B cell (primary cell): ENCODE measurements at regions of chr17 and their contacts with region 1.

Region 1: DNA sequence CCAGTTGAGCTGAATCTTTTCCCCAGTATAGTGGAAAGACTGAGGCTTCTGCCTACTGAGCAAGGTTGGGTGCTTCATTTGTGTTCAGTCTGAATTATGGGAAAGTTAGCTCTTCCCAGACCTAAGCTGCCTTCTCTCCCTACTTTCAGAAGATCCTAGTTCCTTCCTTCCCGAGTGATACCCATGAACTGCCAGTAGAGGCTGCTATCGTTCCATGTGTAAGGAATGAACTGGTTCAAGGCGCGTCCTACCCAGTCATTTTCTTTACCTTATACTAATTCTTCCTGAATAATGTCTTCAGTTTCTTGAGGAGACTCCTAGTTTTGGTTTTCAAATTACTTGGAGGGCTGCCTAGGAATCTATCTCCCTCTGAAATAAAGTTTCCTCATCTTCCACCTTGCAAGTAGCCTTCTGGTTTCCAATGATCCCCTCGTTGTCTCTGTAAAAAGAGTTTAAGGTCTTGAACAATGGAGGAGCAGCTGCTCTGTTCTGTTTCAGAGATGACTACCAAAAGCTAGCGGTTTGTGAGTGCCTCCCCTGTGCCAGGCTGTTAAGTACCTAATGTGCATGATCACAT is 934 bp upstream of the AOC2 start:
- DNase-seq: peak; percentile 60
- ATAC-seq: peak; percentile 49
- H3K4me3 ChIP-seq: no peak overlapping the region
- H3K4me3 Mint-ChIP-seq: no peak overlapping the region
- H3K27ac ChIP-seq: no peak overlapping the region
- H3K27ac Mint-ChIP-seq: no peak overlapping the region
- H3K4me1 ChIP-seq: no peaks in the 10 kb centered on the region
- H3K4me1 Mint-ChIP-seq: no peaks in the 10 kb centered on the region
- H3K27me3 ChIP-seq: no peaks in the 10 kb centered on the region
- H3K27me3 Mint-ChIP-seq: no peaks in the 10 kb centered on the region
- CTCF ChIP-seq: peak; percentile 67

Region 2: DNA sequence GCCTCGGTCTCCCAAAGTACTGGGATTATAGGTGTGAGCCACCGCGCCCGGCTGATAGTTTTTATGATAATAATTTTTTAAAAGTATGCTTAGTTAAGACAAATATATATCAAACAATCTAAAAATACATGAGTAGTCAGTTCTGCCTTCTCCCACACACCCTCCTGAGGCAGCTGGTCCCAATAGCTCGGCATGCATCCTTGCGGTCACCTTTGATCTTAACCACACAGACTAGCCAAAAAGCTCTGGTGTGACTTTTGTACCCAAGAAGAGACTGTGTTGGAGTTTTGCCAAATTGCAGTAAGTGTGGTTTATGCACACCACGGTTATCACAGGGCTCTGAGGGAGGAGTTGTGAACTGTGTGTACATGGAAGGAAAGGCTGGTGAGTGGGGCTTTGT is 359.1 kb before region 1 on chr17:
- CTCF ChIA-PET with region 1: no interaction called
- POLR2A ChIA-PET with region 1: no interaction called
- intact Hi-C with region 1: no loop called
- DNase-seq: no peak
- ATAC-seq: no peak
- H3K4me3 ChIP-seq: no peak overlapping the region
- H3K4me3 Mint-ChIP-seq: no peak overlapping the region
- H3K27ac ChIP-seq: no peak overlapping the region
- H3K27ac Mint-ChIP-seq: no peak overlapping the region
- H3K4me1 ChIP-seq: peaks cover 5 to 7% of the 10 kb centered on the region in 2 donors
- H3K4me1 Mint-ChIP-seq: peaks cover 7% of the 10 kb centered on the region
- H3K27me3 ChIP-seq: no peaks in the 10 kb centered on the region
- H3K27me3 Mint-ChIP-seq: no peaks in the 10 kb centered on the region
- CTCF ChIP-seq: no peak

Region 3: DNA sequence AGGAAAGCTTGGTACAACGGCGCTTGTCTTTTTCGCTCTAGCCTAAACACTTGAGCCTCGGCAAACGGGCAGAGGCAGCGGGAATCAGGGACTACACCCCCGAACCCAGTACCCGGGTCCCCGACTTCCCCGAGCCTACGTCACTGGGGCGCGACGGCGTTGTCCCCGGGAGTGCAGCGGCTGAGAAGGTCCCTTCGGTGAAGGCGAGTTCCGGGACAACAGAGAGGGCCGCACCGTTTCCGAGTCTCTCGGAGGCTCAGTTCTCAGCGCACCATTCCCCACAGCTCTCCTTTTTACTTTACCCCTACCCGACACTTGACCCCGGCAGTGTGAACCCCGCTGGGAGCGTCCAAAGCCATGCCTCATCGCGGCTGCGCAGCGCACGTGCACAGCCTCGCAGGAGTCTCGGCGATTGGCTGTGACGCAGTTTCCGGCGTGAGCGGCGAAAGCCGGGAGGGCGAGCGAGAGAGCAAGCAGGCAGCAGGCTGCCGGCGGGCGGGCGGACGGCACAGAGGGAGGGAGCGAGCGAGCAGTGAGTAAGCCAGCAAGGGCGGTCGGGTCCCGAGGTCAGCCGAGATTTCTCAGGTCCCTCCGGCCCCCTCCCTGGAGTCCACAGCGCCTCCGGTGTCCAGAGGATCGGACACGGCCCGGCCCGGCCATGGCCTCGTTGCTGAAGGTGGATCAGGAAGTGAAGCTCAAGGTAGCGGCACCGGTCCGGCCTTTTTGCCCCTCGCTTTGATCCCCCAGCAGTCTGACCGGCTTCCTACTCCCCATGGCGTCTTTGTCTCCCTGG is 10.3 kb before region 1 on chr17 and contains the start of gene PSME3:
- CTCF ChIA-PET with region 1: interaction called, 6 read pairs
- POLR2A ChIA-PET with region 1: interaction called, 10 read pairs
- intact Hi-C with region 1: no loop called
- DNase-seq: peak; percentile 95
- ATAC-seq: peak; percentile 93
- H3K4me3 ChIP-seq: peak within 1 kb of the TSS; percentile 88 to 99 (median 92)
- H3K4me3 Mint-ChIP-seq: peak within 1 kb of the TSS; percentile 98
- H3K27ac ChIP-seq: peak within 1 kb of the TSS; percentile 84 to 94
- H3K27ac Mint-ChIP-seq: peak within 1 kb of the TSS; percentile 98
- H3K4me1 ChIP-seq: peaks cover 12 to 20% of the 10 kb centered on the region in 2 donors
- H3K4me1 Mint-ChIP-seq: peaks cover 24% of the 10 kb centered on the region
- H3K27me3 ChIP-seq: no peaks in the 10 kb centered on the region
- H3K27me3 Mint-ChIP-seq: no peaks in the 10 kb centered on the region
- CTCF ChIP-seq: no peak
- total RNA-seq, gene PSME3: 70.3 and 76.2 TPM in 2 replicates

Region 4: GRCh38 chr17:42937712-42938596 is 94.5 kb after region 1 on chr17:
- CTCF ChIA-PET with region 1: interaction called, 3 read pairs
- POLR2A ChIA-PET with region 1: no interaction called
- intact Hi-C with region 1: loop called (anchors 10 kb)
- DNase-seq: peak; percentile 48
- ATAC-seq: peak; percentile 45
- H3K4me3 ChIP-seq: no peak overlapping the region
- H3K4me3 Mint-ChIP-seq: no peak overlapping the region
- H3K27ac ChIP-seq: no peak overlapping the region
- H3K27ac Mint-ChIP-seq: no peak overlapping the region
- H3K4me1 ChIP-seq: no peaks in the 10 kb centered on the region
- H3K4me1 Mint-ChIP-seq: no peaks in the 10 kb centered on the region
- H3K27me3 ChIP-seq: peaks cover 0 to 6% (median 1%) of the 10 kb centered on the region in 4 experiments
- H3K27me3 Mint-ChIP-seq: no peaks in the 10 kb centered on the region
- CTCF ChIP-seq: peak; percentile 54